ENCODE measurements at regions of chr14 and their contacts with region 1.

Region 1: DNA sequence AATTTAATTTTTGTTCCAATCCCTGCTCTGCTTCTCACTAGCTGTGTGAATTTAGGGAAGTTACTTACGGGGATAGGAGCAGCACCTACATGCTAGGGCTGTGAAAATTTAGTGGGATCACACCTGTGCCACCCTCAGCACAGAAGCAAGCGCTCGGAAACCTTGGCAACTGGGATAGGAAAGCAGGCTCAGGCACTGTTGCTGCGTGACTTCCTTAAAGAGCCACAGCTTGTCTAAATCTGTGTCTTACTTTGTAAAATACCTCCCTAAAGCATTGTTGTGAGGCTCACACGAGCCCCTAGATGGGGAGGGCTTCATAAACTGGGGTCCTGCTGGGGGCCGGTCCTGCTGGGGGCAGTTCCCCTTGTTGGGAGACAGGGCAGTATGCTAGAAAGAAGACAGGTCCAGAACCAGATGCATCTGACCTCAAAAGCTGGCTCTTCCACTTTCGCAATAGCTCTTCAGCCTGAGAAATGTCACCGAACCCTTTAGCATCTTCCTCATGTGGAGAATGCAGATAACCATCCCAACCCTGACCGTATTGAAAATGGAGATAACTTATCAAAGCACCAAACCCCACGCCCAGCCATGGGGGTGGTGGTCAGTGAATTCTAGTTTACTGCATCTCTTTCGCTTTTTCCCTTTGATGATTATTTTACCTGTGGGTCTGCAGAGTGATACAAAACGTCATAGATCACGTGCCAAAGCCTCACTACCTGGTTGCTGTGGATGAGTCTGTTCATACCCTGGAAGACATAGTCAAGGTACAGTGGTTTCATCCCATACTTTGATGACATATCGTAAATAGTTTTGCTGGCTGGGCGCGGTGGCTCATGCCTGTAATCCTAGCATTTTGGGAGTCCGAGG is 54.1 kb downstream of the AK7 start:
- DNase-seq: peak in 2 of 4 experiments; percentile 9 to 38
- ATAC-seq: peak; percentile 35; the same call in 1 of the 3 replicates
- H3K4me3 ChIP-seq: no peak overlapping the region
- H3K27ac ChIP-seq: no peak overlapping the region
- H3K4me1 ChIP-seq: peaks cover 0 to 4% of the 10 kb centered on the region in 2 experiments; a peak in 2 of 5 replicates
- H3K27me3 ChIP-seq: peaks cover 3 to 14% of the 10 kb centered on the region in 2 experiments; a peak in 4 of 5 replicates
- CTCF ChIP-seq: no peak; a peak in 1 of 6 replicates
- EP300 ChIP-seq: peak; percentile 45; the same call in 1 of the 2 replicates
- POLR2A ChIP-seq: no peak
- RAD21 ChIP-seq: no peak

Region 2: DNA sequence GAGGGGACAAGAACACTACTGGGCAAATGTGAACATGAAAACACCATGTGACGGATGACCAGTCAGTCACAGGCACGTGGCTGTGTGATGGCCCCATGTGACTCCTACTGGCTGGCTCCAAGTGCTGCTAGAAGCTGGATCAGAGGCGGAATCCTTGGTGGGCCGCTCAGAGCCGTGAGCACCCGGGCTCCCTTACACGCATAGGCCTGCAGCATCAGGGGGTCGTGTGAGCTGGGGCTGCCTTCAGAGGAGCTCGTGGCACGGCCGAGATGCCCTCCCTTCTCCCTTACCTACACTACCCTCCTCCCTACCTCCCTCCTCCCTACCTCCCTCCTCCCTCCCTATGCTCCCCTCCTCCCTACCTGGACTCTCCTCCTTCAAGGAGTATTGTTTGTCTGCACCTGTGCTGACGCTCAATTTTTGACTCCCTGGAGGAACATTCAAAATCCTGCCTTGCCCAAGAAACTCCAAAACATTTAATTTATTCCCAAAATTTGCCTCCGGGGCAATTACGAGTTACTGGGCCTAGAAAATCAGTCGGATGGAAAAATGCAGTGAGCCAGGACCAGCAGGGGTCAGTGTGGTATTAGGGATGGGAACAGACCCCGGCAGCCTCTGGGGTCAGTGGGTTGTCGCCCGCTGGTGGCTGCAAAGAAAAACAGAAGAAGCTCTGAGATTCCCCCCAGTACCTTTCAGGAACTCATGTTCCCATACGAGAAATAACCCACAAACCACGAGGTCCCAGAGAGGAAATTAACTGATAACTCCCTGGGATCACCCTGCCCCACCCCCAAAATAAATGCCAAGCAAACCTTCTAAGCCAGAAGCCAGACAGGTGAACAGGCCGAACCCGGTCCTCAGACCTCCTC is 345.7 kb before region 1 on chr14:
- CTCF ChIA-PET with region 1: no interaction called
- POLR2A ChIA-PET with region 1: no interaction called
- in situ Hi-C with region 1: loop called (anchors 10 kb)
- intact Hi-C with region 1: no loop called
- DNase-seq: peak; percentile 70 to 75 (median 75)
- ATAC-seq: peak; percentile 93
- H3K4me3 ChIP-seq: no peak overlapping the region
- H3K27ac ChIP-seq: no peak overlapping the region
- H3K4me1 ChIP-seq: peaks cover 0 to 3% of the 10 kb centered on the region in 2 experiments; a peak in 1 of 5 replicates
- H3K27me3 ChIP-seq: peaks cover 0 to 7% of the 10 kb centered on the region in 2 experiments; a peak in 1 of 5 replicates
- CTCF ChIP-seq: peak; percentile 89 to 99 (median 99)
- EP300 ChIP-seq: no peak
- POLR2A ChIP-seq: no peak
- RAD21 ChIP-seq: peak; percentile 87 to 89

Region 3: DNA sequence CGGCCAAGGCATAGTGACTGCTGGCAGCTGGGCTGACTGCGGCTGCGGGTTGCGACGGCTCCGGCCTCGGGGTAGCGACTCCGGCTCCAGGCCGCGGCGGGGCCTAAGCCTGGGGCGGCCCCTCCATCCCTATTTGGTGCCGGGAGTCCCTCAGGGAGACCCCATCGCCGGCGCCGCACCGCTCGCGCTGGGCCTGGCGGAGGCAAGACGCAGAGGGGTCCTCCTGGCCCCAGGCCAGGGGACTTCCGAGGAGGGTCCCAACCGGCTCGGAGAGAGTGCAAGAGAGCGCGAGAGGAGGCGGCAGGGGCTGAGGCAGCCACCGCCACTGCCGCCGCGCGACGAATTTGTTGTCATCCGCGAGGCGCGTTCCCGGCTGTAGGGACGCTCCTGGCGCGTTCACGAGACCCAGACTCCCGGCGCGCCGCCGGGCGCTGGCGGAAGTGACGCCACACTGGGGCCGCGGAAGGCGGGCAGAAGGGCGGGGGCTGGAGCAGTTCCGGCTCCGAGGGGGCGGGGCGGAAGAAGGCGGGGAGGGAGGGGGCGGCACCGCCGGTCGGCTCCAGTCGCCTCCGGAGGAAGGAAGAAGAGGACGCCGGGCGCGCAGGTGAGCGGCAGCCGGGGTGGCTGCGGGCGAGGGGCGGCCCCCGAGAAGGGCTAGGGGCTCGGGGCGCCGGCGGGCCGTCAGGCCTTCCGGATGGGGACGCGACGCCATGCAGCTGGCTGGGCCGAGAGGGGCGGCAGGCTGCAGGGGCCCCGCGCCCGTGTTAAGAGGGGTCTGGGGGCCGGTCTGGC is 82.9 kb before region 1 on chr14 and contains the starts of genes ATG2B and GSKIP:
- CTCF ChIA-PET with region 1: no interaction called
- POLR2A ChIA-PET with region 1: no interaction called
- in situ Hi-C with region 1: no loop called
- intact Hi-C with region 1: no loop called
- DNase-seq: peak; percentile 87 to 93 (median 90)
- ATAC-seq: peak; percentile 75
- H3K4me3 ChIP-seq: peak within 1 kb of the TSS; percentile 92
- H3K27ac ChIP-seq: peak within 1 kb of the TSS; percentile 78
- H3K4me1 ChIP-seq: peaks cover 15 to 31% of the 10 kb centered on the region in 2 experiments
- H3K27me3 ChIP-seq: no peaks in the 10 kb centered on the region
- CTCF ChIP-seq: no peak
- EP300 ChIP-seq: no peak
- POLR2A ChIP-seq: peak; percentile 65
- RAD21 ChIP-seq: no peak
- polyA plus RNA-seq, gene ATG2B: 0.83 to 1.6 TPM
- polyA plus RNA-seq, gene GSKIP: 47.6 to 58.9 TPM

Region 4: GRCh38 chr14:96405677-96406076 is 40.4 kb before region 1 on chr14:
- CTCF ChIA-PET with region 1: no interaction called
- POLR2A ChIA-PET with region 1: no interaction called
- in situ Hi-C with region 1: no loop called
- intact Hi-C with region 1: no loop called
- DNase-seq: no peak
- ATAC-seq: peak; percentile 74
- H3K4me3 ChIP-seq: no peak overlapping the region
- H3K27ac ChIP-seq: no peak overlapping the region
- H3K4me1 ChIP-seq: peaks cover 12 to 13% of the 10 kb centered on the region in 2 experiments; a peak in 3 of 5 replicates
- H3K27me3 ChIP-seq: no peaks in the 10 kb centered on the region
- CTCF ChIP-seq: no peak
- EP300 ChIP-seq: no peak
- POLR2A ChIP-seq: no peak
- RAD21 ChIP-seq: no peak

Measured in K562 (cell line).